Sigmoid colon (tissue), 7 donors: ENCODE measurements at regions of chr10 and their contacts with region 1.

Region 1: DNA sequence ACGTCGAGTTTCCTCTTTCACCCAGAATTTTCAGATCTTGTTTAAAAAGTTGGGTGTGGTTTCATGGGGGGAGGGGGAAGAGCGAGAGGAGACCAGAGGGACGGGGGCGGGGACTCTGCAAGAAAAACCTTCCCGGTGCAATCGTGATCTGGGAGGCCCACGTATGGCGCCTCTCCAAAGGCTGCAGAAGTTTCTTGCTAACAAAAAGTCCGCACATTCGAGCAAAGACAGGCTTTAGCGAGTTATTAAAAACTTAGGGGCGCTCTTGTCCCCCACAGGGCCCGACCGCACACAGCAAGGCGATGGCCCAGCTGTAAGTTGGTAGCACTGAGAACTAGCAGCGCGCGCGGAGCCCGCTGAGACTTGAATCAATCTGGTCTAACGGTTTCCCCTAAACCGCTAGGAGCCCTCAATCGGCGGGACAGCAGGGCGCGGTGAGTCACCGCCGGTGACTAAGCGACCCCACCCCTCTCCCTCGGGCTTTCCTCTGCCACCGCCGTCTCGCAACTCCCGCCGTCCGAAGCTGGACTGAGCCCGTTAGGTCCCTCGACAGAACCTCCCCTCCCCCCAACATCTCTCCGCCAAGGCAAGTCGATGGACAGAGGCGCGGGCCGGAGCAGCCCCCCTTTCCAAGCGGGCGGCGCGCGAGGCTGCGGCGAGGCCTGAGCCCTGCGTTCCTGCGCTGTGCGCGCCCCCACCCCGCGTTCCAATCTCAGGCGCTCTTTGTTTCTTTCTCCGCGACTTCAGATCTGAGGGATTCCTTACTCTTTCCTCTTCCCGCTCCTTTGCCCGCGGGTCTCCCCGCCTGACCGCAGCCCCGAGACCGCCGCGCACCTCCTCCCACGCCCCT is at the start of gene VIM:
- DNase-seq: peak; percentile 98
- H3K4me3 ChIP-seq: peak within 1 kb of the TSS; percentile 50 to 70 (median 61)
- H3K27ac ChIP-seq: peak within 1 kb of the TSS; percentile 86 to 99 (median 97)
- H3K4me1 ChIP-seq: peaks cover 0 to 55% (median 28%) of the 10 kb centered on the region in 4 donors
- H3K27me3 ChIP-seq: no peaks in the 10 kb centered on the region
- CTCF ChIP-seq: no peak
- EP300 ChIP-seq: peak in 1 of 4 donors; percentile 8
- POLR2A ChIP-seq: peak; percentile 27 to 34
- total RNA-seq, gene VIM: 930 to 1,636 (median 1,211) TPM

Region 2: GRCh38 chr10:17200912-17201793 is 27.2 kb before region 1 on chr10 and contains the start of gene TRDMT1:
- intact Hi-C with region 1: loop called (anchors 2 kb)
- DNase-seq: peak; percentile 94
- H3K4me3 ChIP-seq: peak within 1 kb of the TSS; percentile 67 to 77 (median 70)
- H3K27ac ChIP-seq: peak within 1 kb of the TSS; percentile 88 to 95 (median 91)
- H3K4me1 ChIP-seq: peaks cover 3 to 15% (median 10%) of the 10 kb centered on the region in 4 donors
- H3K27me3 ChIP-seq: no peaks in the 10 kb centered on the region
- CTCF ChIP-seq: no peak
- EP300 ChIP-seq: no peak
- POLR2A ChIP-seq: peak in 1 of 2 donors; percentile 29
- total RNA-seq, gene TRDMT1: 7.5 to 13.6 (median 8.4) TPM